ENCODE measurements at regions of chr15 and their contacts with region 1.

Region 1: GRCh38 chr15:89904519-89904918 is 8.2 kb downstream of the ARPIN start:
- DNase-seq: no peak
- H3K4me3 ChIP-seq: no peak overlapping the region
- H3K27ac ChIP-seq: no peak overlapping the region
- H3K4me1 ChIP-seq: no peaks in the 10 kb centered on the region
- H3K27me3 ChIP-seq: no peaks in the 10 kb centered on the region
- CTCF ChIP-seq: no peak

Region 2: GRCh38 chr15:89828241-89829082 is 76.1 kb before region 1 on chr15:
- intact Hi-C with region 1: no loop called
- DNase-seq: peak; percentile 53
- H3K4me3 ChIP-seq: no peak overlapping the region
- H3K27ac ChIP-seq: peak overlapping the region; percentile 19
- H3K4me1 ChIP-seq: peaks cover 7% of the 10 kb centered on the region
- H3K27me3 ChIP-seq: no peaks in the 10 kb centered on the region
- CTCF ChIP-seq: no peak

Region 3: GRCh38 chr15:89845305-89845893 is 59.1 kb before region 1 on chr15:
- intact Hi-C with region 1: no loop called
- DNase-seq: no peak
- H3K4me3 ChIP-seq: no peak overlapping the region
- H3K27ac ChIP-seq: no peak overlapping the region
- H3K4me1 ChIP-seq: no peaks in the 10 kb centered on the region
- H3K27me3 ChIP-seq: no peaks in the 10 kb centered on the region
- CTCF ChIP-seq: no peak

Region 4: GRCh38 chr15:90071208-90071807 is 166.8 kb after region 1 on chr15:
- intact Hi-C with region 1: loop called (anchors 5 kb)
- DNase-seq: peak; percentile 90
- H3K4me3 ChIP-seq: no peak overlapping the region
- H3K27ac ChIP-seq: no peak overlapping the region
- H3K4me1 ChIP-seq: no peaks in the 10 kb centered on the region
- H3K27me3 ChIP-seq: no peaks in the 10 kb centered on the region
- CTCF ChIP-seq: peak; percentile 65

Region 5: DNA sequence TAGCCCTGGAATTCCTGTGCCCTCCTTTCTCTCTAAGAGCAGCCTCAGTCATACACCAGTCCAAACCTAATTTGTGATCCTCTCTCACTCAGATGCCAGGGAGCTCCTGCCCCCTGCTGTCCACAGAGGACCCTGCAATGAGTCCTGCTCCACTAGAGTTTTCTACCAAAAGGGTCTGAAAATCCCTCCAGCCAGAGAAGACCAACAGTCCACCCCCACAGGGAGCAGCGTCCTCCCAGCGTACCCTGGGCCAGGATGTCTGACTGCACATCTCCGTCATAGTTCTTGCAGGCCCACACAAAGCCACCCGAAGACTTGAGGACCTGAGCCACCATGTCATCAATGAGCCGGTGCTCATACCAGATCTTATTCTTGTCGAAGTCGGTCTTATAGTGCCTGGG is 182.3 kb after region 1 on chr15:
- intact Hi-C with region 1: loop called (anchors 5 kb)
- DNase-seq: peak; percentile 63
- H3K4me3 ChIP-seq: no peak overlapping the region
- H3K27ac ChIP-seq: no peak overlapping the region
- H3K4me1 ChIP-seq: no peaks in the 10 kb centered on the region
- H3K27me3 ChIP-seq: no peaks in the 10 kb centered on the region
- CTCF ChIP-seq: peak; percentile 64